SK-N-SH (cell line): ENCODE measurements at regions of chr5 and their contacts with region 1.

Region 1: GRCh38 chr5:139711067-139711905 is 63.1 kb downstream of the CXXC5 start:
- DNase-seq: peak; percentile 82
- H3K4me3 ChIP-seq: peak overlapping the region; percentile 55 to 67
- H3K27ac ChIP-seq: peak overlapping the region; percentile 95 to 99
- H3K4me1 ChIP-seq: peaks cover 21 to 48% of the 10 kb centered on the region in 2 experiments
- H3K27me3 ChIP-seq: no peaks in the 10 kb centered on the region
- CTCF ChIP-seq: peak; percentile 38
- EP300 ChIP-seq: peak in 1 of 2 experiments; percentile 29; a peak in 1 of 4 replicates
- RAD21 ChIP-seq: peak; percentile 8; the same call in 1 of the 2 replicates

Region 2: GRCh38 chr5:139660923-139661814 is 50.1 kb before region 1 on chr5:
- CTCF ChIA-PET with region 1: interaction called, 6 read pairs
- POLR2A ChIA-PET with region 1: interaction called, 28 read pairs
- DNase-seq: peak; percentile 84
- H3K4me3 ChIP-seq: no peak overlapping the region
- H3K27ac ChIP-seq: peak overlapping the region; percentile 96 to 99
- H3K4me1 ChIP-seq: peaks cover 76 to 96% of the 10 kb centered on the region in 2 experiments
- H3K27me3 ChIP-seq: no peaks in the 10 kb centered on the region
- CTCF ChIP-seq: no peak
- EP300 ChIP-seq: peak in 1 of 2 experiments; percentile 69; a peak in 2 of 4 replicates
- RAD21 ChIP-seq: no peak

Region 3: DNA sequence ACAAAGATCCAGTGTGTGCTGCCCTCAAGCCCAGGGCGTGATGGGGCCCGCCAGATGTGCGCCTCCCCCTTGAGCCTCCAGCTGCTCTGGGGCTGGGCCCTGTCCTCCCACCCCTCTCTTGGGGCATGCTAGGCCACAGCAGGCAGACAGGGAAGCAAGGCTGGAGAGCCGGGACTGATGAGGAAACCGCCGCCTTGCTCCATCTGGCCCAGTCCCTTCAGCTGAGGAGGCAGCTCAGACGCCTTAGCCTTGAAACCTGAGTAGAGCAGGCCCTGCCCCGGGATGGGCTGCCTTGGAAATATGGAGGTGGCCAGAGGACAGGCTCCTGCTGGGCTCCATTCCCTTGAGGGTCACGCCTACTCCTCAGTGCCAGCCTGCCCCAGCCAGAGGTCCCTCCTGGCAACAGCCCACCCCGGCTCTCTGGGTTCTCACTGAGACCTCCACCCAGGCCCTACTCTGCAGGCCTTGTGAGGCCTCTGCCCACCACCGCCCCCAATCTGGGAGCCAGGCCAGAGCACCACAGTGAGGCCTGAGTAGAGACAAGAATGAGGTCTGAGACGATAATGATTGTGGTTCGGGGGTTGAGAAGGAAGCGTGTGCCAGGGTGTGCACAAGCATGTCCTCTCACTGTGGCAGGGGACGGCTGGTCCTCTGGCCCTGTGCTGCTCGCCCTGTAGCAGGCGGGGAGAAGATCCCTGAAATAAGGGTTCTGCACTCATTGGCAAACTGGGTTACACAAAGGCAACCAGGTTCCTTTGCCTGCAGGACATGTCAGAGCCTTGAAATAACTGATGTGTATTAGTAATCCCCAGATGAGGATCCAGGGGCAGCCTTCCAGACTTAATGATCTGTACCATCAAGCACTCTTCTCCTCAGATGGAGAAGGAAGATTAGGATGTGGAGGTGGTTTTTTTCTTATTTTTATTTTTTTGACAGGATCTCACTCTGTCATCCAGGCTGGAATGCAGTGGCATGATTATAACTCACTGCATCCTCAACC is 32.2 kb before region 1 on chr5:
- CTCF ChIA-PET with region 1: interaction called, 10 read pairs
- POLR2A ChIA-PET with region 1: interaction called, 9 read pairs
- DNase-seq: peak; percentile 56
- H3K4me3 ChIP-seq: no peak overlapping the region
- H3K27ac ChIP-seq: peak overlapping the region; percentile 54 to 99; a peak in 3 of 4 replicates
- H3K4me1 ChIP-seq: peaks cover 27 to 50% of the 10 kb centered on the region in 2 experiments; a peak in 3 of 4 replicates
- H3K27me3 ChIP-seq: no peaks in the 10 kb centered on the region
- CTCF ChIP-seq: no peak
- EP300 ChIP-seq: no peak
- RAD21 ChIP-seq: no peak

Region 4: DNA sequence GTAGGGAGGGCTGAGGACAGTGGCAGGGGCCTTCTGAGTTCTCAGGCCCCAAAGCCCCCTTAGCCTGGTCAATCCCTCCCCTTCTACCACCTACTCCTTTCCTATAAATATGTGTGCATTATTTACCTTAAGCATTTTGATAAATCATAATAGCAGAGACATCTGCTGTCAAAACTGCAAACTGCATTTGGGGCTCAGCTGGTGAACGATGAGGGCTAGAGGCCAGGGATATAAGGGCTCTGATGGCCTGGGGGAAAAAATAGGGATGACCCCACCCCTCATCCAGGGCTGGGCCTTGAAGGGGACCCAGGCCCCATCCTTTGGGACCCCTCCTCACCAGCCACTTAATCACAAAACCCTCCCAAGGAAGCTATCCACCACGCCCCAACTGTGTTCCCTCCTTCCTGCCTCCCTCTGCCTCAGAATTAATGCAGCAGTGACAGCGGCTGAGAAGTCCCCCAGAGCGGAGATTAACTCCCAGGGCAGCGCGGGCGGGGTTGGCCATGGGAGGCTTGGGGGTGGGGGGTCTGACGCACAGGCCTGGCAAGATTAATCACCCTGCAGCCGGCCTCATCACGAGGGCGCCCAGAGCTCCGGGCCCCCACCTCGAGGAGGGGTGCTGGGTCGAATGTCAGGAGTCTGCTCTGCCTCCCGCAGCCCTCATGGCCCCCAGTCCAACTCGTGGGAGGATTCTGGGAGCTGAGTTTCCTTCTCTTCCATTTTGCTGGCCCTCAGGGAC is 21.1 kb before region 1 on chr5:
- CTCF ChIA-PET with region 1: interaction called, 31 read pairs
- POLR2A ChIA-PET with region 1: interaction called, 4 read pairs
- DNase-seq: peak; percentile 77
- H3K4me3 ChIP-seq: no peak overlapping the region
- H3K27ac ChIP-seq: peak overlapping the region; percentile 71 to 97
- H3K4me1 ChIP-seq: peaks cover 41 to 75% of the 10 kb centered on the region in 2 experiments
- H3K27me3 ChIP-seq: no peaks in the 10 kb centered on the region
- CTCF ChIP-seq: peak; percentile 64
- EP300 ChIP-seq: peak in 1 of 2 experiments; percentile 61; a peak in 1 of 4 replicates
- RAD21 ChIP-seq: peak; percentile 76

Region 5: DNA sequence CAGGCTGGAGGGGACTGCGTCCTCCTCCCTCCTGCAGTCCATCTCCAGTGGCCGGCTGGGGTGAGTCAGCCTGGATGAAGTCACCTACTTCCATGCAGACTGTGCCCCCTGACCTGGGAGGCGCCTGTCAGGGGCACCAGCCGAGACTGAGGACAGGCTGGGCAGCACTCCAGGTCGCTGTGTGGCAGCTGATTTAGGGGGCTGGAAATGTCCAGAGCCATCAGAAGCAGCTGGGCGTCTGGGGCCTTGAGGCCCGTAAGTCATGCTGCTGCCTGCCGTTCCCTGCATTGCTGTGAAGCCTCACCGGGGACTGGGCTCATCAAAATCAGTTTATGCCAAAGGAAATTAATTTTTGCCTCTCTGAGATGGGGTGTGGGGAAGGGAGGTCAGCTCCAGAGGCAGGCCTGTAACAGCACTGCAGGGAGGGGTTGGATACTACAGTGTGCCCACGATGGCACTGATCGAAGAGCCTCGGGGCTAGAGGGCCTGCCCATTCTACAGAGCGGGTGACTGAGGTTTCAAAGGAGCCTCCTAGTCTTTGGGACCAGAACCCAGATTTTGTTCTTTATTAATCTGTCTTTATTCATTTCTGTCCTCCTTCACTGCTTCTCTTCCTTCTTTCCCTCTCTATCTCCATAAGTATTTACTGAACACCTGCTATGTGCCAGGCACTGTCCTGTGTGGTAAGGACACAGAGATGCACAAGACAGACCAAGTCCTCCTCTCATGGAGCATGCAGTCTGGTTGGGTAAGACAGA is 14.0 kb after region 1 on chr5:
- CTCF ChIA-PET with region 1: interaction called, 7 read pairs
- POLR2A ChIA-PET with region 1: interaction called, 10 read pairs
- DNase-seq: peak; percentile 85
- H3K4me3 ChIP-seq: no peak overlapping the region
- H3K27ac ChIP-seq: peak overlapping the region; percentile 66 to 83; a peak in 3 of 4 replicates
- H3K4me1 ChIP-seq: peaks cover 12 to 17% of the 10 kb centered on the region in 2 experiments; a peak in 3 of 4 replicates
- H3K27me3 ChIP-seq: no peaks in the 10 kb centered on the region
- CTCF ChIP-seq: no peak
- EP300 ChIP-seq: peak; percentile 74 to 93
- RAD21 ChIP-seq: peak; percentile 21; the same call in 1 of the 2 replicates

Region 6: DNA sequence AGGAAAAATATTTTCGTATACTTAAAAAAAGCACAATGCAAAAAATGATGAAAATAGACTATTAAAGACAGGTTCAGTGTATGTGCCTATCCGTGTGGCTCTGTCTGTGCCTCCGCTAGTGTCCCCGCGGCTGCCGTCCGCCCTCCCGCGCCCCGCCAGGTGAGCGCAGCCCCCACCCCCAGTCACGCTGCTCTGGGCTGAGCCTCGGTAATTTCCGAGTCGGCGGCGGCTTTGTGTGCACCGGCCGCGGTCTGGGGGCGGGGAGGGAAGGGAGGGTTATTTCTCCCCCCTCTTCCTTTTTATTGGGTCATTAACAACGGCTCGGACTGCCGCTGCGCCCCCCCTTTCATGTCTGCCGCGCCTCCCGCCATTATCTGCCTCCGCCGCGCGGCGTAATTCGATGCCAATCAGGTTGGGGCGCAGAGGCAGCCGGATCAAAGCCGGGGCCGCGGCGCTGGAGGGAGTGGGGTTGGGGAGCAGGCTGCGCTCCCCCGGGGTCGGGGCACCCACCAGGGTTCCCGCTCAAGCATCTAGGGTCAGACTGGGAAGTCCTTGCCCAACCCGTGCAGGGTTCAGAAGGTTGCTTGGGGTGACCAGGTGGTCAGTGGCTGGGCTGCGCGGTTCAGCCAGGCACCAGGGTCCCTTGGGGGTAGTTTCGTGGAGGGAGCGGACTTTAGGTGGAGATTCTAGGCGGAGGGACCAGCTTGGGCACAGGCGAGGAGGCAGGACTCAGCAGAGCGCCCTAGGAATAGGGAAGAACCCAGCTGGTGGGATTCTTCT is 44.8 kb after region 1 on chr5:
- CTCF ChIA-PET with region 1: interaction called, 3 read pairs
- POLR2A ChIA-PET with region 1: interaction called, 11 read pairs
- DNase-seq: peak; percentile 70
- H3K4me3 ChIP-seq: no peak overlapping the region
- H3K27ac ChIP-seq: no peak overlapping the region
- H3K4me1 ChIP-seq: peaks cover 13 to 37% of the 10 kb centered on the region in 2 experiments; a peak in 3 of 4 replicates
- H3K27me3 ChIP-seq: no peaks in the 10 kb centered on the region
- CTCF ChIP-seq: no peak
- EP300 ChIP-seq: no peak
- RAD21 ChIP-seq: no peak